ENCODE measurements at regions of chr12 and their contacts with region 1.

Region 1: DNA sequence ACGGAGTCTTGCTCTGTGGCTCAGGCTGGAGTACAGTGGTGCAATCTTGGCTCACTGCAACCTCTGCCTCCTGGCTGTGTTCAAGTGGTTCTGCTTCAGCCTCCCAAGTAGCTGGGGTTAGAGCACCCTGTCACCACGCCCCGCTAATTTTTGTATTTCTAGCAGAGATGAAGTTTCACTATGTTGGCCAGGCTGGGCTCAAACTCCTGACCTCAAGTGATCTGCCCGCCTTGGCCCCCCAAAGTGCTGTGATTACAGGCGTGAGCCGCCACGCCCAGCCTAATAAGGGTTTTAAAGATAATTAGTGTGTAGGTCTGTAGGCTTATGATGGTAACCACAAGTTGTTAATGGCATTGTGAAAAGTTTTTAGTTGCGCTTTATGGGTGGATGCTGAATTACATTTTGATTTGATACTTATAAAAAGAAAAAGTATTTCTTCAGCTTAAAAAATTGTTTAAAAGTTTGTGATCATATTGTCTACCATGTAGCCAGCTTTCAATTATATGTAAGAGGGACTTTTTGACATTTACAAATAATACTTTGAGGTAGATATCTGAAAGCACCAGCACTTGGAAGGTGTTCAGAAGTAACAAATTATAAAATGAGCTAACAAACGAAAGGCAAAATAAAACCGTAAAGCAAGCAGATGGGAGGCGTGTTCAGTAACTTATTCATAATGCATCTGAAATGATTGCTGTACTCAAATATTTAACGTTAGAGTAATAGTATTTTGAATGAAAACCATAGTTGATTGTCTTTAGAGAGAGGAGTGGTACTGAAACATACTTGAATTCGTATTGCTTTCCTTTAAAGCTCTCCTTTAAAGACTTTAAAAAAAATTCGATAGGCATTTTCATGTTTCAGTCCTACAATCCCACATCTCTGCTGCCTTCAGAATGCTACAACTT is 37.1 kb downstream of the MDM2 start:
- DNase-seq: no peak
- ATAC-seq: no peak
- H3K4me3 Mint-ChIP-seq: no peak overlapping the region
- H3K27ac Mint-ChIP-seq: no peak overlapping the region
- H3K4me1 Mint-ChIP-seq: no peaks in the 10 kb centered on the region
- H3K27me3 Mint-ChIP-seq: no peaks in the 10 kb centered on the region

Region 2: DNA sequence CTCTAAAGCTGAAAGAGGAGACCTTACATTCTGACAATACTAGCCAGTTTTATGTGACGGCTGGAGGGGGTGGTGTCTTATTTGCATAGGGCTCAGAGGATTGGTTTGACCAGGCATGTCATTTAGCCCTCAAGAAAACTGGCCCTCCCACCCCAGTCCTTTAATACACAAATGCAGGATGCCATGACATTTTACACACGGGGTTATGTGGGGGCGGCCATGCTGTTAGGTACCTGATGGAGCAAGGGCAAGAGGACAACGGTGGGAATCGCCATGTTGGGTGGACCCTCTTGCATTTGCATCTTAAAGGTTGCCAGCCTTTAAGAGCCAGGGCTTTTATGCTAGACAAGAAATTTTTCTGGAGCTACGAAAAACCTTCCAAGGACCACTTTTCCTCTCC is 13.8 kb before region 1 on chr12:
- CTCF ChIA-PET with region 1: interaction called, 14 read pairs
- DNase-seq: no peak
- ATAC-seq: no peak
- H3K4me3 Mint-ChIP-seq: no peak overlapping the region
- H3K27ac Mint-ChIP-seq: no peak overlapping the region
- H3K4me1 Mint-ChIP-seq: peaks cover 14% of the 10 kb centered on the region
- H3K27me3 Mint-ChIP-seq: no peaks in the 10 kb centered on the region